Heart right ventricle (tissue), 16 donors: ENCODE measurements at regions of chr7 and their contacts with region 1.

Region 1: GRCh38 chr7:77651573-77652162 is 44.6 kb upstream of the RSBN1L start:
- DNase-seq: peak in 1 of 2 donors; percentile 21
- ATAC-seq: peak in 1 of 8 donors; percentile 34
- H3K4me3 ChIP-seq: no peak overlapping the region
- H3K27ac ChIP-seq: no peak overlapping the region
- H3K4me1 ChIP-seq: peaks cover 0 to 6% (median 0%) of the 10 kb centered on the region in 9 donors
- H3K27me3 ChIP-seq: no peaks in the 10 kb centered on the region
- CTCF ChIP-seq: peak; percentile 58 to 83 (median 77)

Region 2: DNA sequence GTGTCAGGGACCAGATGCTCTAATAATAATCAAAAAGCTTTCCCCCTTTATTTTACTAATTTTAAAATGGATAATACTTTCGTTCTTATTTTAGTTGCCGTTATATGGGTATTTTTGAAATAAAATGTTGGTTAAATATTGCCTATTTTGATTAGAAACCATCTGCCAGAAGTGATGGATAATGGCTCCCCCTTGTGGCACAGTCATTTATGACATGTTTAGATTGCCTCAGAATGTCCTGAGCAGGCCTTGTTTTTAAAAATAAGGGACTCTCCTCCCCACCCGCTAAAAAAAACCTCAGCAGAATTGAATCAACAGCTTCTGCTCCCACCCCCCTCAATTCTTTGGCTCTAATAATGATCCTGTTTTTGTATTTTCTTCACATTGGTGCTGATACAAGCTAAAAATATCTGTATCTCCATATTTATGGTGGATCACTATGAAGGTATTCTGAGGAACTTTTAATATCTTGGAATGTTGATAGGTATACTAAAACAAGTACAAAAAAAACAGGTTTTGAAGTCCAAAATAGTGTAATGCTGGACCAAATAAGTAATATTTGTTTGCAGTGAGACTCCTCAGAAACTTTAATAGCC is 107.7 kb after region 1 on chr7:
- intact Hi-C with region 1: loop called in 9 of 10 experiments (anchors 1 to 5 kb)
- DNase-seq: peak in 1 of 2 donors; percentile 73
- ATAC-seq: peak in 6 of 8 donors; percentile 33 to 84 (median 76)
- H3K4me3 ChIP-seq: no peak overlapping the region
- H3K27ac ChIP-seq: peak overlapping the region in 1 of 10 donors; percentile 13
- H3K4me1 ChIP-seq: peaks cover 0 to 23% (median 15%) of the 10 kb centered on the region in 9 donors
- H3K27me3 ChIP-seq: no peaks in the 10 kb centered on the region
- CTCF ChIP-seq: peak; percentile 67 to 89 (median 84)